B cell (primary cell): ENCODE measurements at regions of chr14 and their contacts with region 1.

Region 1: GRCh38 chr14:58107947-58108552 is 44.0 kb downstream of the ARMH4 start:
- DNase-seq: peak; percentile 43
- ATAC-seq: no peak
- H3K4me3 ChIP-seq: no peak overlapping the region
- H3K4me3 Mint-ChIP-seq: no peak overlapping the region
- H3K27ac ChIP-seq: no peak overlapping the region
- H3K27ac Mint-ChIP-seq: no peak overlapping the region
- H3K4me1 ChIP-seq: no peaks in the 10 kb centered on the region
- H3K4me1 Mint-ChIP-seq: no peaks in the 10 kb centered on the region
- H3K27me3 ChIP-seq: no peaks in the 10 kb centered on the region
- H3K27me3 Mint-ChIP-seq: peaks cover 16% of the 10 kb centered on the region
- CTCF ChIP-seq: peak; percentile 77

Region 2: DNA sequence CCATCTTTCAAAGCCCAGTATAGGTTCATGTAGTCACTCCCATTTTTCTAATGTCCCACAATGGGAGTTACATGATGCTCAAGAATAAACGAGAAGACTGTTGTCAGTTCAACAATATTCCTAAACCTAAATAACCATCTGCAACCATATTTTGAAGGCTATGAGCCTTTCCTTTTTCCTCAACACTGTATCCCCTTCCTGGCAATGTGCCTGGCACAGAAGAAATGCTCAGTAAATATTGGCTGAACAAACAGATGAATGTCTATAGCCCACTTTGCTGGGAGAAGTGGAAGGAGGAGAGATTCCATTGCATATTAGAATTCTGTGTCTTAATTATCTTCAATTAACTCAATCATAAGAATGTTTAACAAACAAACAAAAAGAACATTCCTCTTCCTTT is 37.9 kb after region 1 on chr14:
- CTCF ChIA-PET with region 1: no interaction called
- POLR2A ChIA-PET with region 1: no interaction called
- intact Hi-C with region 1: no loop called
- DNase-seq: no peak
- ATAC-seq: no peak
- H3K4me3 ChIP-seq: no peak overlapping the region
- H3K4me3 Mint-ChIP-seq: no peak overlapping the region
- H3K27ac ChIP-seq: no peak overlapping the region
- H3K27ac Mint-ChIP-seq: no peak overlapping the region
- H3K4me1 ChIP-seq: peaks cover under 1% of the 10 kb centered on the region in 2 donors
- H3K4me1 Mint-ChIP-seq: peaks cover 2% of the 10 kb centered on the region
- H3K27me3 ChIP-seq: peaks cover 0 to 16% (median 10%) of the 10 kb centered on the region in 4 experiments
- H3K27me3 Mint-ChIP-seq: peaks cover 24% of the 10 kb centered on the region
- CTCF ChIP-seq: no peak

Region 3: GRCh38 chr14:58166005-58166983 is 58.2 kb after region 1 on chr14:
- CTCF ChIA-PET with region 1: interaction called, 7 read pairs
- POLR2A ChIA-PET with region 1: no interaction called
- intact Hi-C with region 1: loop called (anchors 1 kb)
- DNase-seq: peak; percentile 70
- ATAC-seq: no peak
- H3K4me3 ChIP-seq: no peak overlapping the region
- H3K4me3 Mint-ChIP-seq: no peak overlapping the region
- H3K27ac ChIP-seq: no peak overlapping the region
- H3K27ac Mint-ChIP-seq: no peak overlapping the region
- H3K4me1 ChIP-seq: no peaks in the 10 kb centered on the region
- H3K4me1 Mint-ChIP-seq: no peaks in the 10 kb centered on the region
- H3K27me3 ChIP-seq: peaks cover 0 to 3% (median under 1%) of the 10 kb centered on the region in 4 experiments
- H3K27me3 Mint-ChIP-seq: peaks cover 33% of the 10 kb centered on the region
- CTCF ChIP-seq: peak; percentile 88

Region 4: GRCh38 chr14:58362798-58363412 is 254.9 kb after region 1 on chr14:
- CTCF ChIA-PET with region 1: interaction called, 5 read pairs
- POLR2A ChIA-PET with region 1: no interaction called
- intact Hi-C with region 1: loop called (anchors 2 kb)
- DNase-seq: peak; percentile 35
- ATAC-seq: peak; percentile 33
- H3K4me3 ChIP-seq: no peak overlapping the region
- H3K4me3 Mint-ChIP-seq: no peak overlapping the region
- H3K27ac ChIP-seq: no peak overlapping the region
- H3K27ac Mint-ChIP-seq: no peak overlapping the region
- H3K4me1 ChIP-seq: no peaks in the 10 kb centered on the region
- H3K4me1 Mint-ChIP-seq: no peaks in the 10 kb centered on the region
- H3K27me3 ChIP-seq: no peaks in the 10 kb centered on the region
- H3K27me3 Mint-ChIP-seq: no peaks in the 10 kb centered on the region
- CTCF ChIP-seq: peak; percentile 37